ENCODE measurements at regions of chr14 and their contacts with region 1.

Region 1: GRCh38 chr14:95830386-95830785 is 46.2 kb upstream of the TUNAR start:
- DNase-seq: no peak
- H3K4me3 Mint-ChIP-seq: no peak overlapping the region
- H3K27ac Mint-ChIP-seq: no peak overlapping the region
- H3K4me1 Mint-ChIP-seq: peaks cover 3% of the 10 kb centered on the region
- H3K27me3 Mint-ChIP-seq: peaks cover 18% of the 10 kb centered on the region
- CTCF ChIP-seq: no peak

Region 2: DNA sequence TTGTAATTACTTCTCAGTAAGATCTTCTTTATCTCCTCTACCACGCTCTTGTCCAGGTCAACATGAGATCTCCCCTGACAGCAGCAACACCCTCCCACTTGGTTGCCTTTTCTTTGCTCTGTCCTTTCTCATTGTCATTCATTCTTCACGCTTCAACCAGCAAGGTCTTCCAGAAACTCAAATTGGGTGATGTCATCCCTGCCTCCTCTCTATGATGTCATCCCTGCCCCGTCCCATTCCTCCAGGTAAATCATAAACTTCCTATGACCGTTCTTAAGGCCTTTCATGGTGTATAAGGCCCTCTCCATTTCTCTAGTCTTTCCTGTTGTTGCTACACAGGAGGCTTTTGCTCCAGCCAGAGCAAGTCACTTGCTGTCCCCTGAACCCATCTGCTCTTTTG is 28.5 kb after region 1 on chr14:
- CTCF ChIA-PET with region 1: no interaction called
- POLR2A ChIA-PET with region 1: no interaction called
- intact Hi-C with region 1: loop called (anchors 1 kb)
- DNase-seq: no peak
- H3K4me3 Mint-ChIP-seq: no peak overlapping the region
- H3K27ac Mint-ChIP-seq: no peak overlapping the region
- H3K4me1 Mint-ChIP-seq: no peaks in the 10 kb centered on the region
- H3K27me3 Mint-ChIP-seq: peaks cover 35% of the 10 kb centered on the region
- CTCF ChIP-seq: no peak